MCF 10A (cell line): ENCODE measurements at regions of chr11 and their contacts with region 1.

Region 1: GRCh38 chr11:63838678-63839507 is at the start of gene MARK2:
- DNase-seq: peak; percentile 97
- H3K4me3 Mint-ChIP-seq: peak within 1 kb of the TSS; percentile 93
- H3K27ac Mint-ChIP-seq: peak within 1 kb of the TSS; percentile 73
- H3K4me1 Mint-ChIP-seq: peaks cover 40% of the 10 kb centered on the region
- H3K27me3 Mint-ChIP-seq: no peaks in the 10 kb centered on the region
- CTCF ChIP-seq: no peak
- total RNA-seq, gene MARK2: 36.9 and 39.8 TPM in 2 replicates

Region 2: GRCh38 chr11:63536669-63537292 is 302.1 kb before region 1 on chr11 and contains the start of gene PLAAT4:
- CTCF ChIA-PET with region 1: no interaction called
- POLR2A ChIA-PET with region 1: no interaction called
- intact Hi-C with region 1: no loop called
- DNase-seq: peak; percentile 11
- H3K4me3 Mint-ChIP-seq: peak within 1 kb of the TSS; percentile 39
- H3K27ac Mint-ChIP-seq: peak within 1 kb of the TSS; percentile 84
- H3K4me1 Mint-ChIP-seq: peaks cover 7% of the 10 kb centered on the region
- H3K27me3 Mint-ChIP-seq: no peaks in the 10 kb centered on the region
- CTCF ChIP-seq: no peak
- total RNA-seq, gene PLAAT4: 0.69 and 0.96 TPM in 2 replicates

Region 3: GRCh38 chr11:63768237-63769043 is 70.5 kb before region 1 on chr11 and contains the start of gene ZFTA:
- CTCF ChIA-PET with region 1: interaction called, 25 read pairs
- POLR2A ChIA-PET with region 1: interaction called, 5 read pairs
- intact Hi-C with region 1: loop called (anchors 2 kb)
- DNase-seq: peak; percentile 50
- H3K4me3 Mint-ChIP-seq: peak within 1 kb of the TSS; percentile 97
- H3K27ac Mint-ChIP-seq: peak within 1 kb of the TSS; percentile 68
- H3K4me1 Mint-ChIP-seq: peaks cover 12% of the 10 kb centered on the region
- H3K27me3 Mint-ChIP-seq: no peaks in the 10 kb centered on the region
- CTCF ChIP-seq: peak; percentile 81
- total RNA-seq, gene ZFTA: 2.6 and 5.2 TPM in 2 replicates

Region 4: GRCh38 chr11:63866211-63866610 is 27.3 kb after region 1 on chr11:
- CTCF ChIA-PET with region 1: interaction called, 19 read pairs
- POLR2A ChIA-PET with region 1: interaction called, 19 read pairs
- intact Hi-C with region 1: no loop called
- DNase-seq: peak; percentile 83
- H3K4me3 Mint-ChIP-seq: no peak overlapping the region
- H3K27ac Mint-ChIP-seq: peak overlapping the region; percentile 13
- H3K4me1 Mint-ChIP-seq: peaks cover 43% of the 10 kb centered on the region
- H3K27me3 Mint-ChIP-seq: no peaks in the 10 kb centered on the region
- CTCF ChIP-seq: no peak

Region 5: DNA sequence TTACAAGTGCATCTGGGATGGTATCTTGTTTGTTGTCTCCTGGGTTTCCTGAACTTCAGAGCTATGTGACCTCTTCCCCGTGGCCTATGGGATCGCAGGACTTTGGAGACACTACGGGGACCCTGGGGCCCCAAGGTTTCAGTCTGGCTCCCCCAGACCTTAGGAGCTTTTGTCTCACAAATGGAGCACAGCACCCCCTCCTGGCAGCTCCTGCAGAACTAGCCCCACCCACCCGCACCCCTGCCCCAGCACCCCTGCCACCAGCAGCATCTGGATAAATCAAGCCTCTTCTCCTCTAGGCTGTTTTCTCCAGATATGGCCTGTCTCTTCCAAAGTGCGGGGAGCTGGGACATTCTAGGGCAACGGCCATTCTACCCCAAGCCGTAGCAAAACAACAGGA is 67.7 kb after region 1 on chr11:
- CTCF ChIA-PET with region 1: interaction called, 41 read pairs
- POLR2A ChIA-PET with region 1: no interaction called
- intact Hi-C with region 1: loop called (anchors 1 kb)
- DNase-seq: no peak
- H3K4me3 Mint-ChIP-seq: no peak overlapping the region
- H3K27ac Mint-ChIP-seq: no peak overlapping the region
- H3K4me1 Mint-ChIP-seq: no peaks in the 10 kb centered on the region
- H3K27me3 Mint-ChIP-seq: no peaks in the 10 kb centered on the region
- CTCF ChIP-seq: peak; percentile 37

Region 6: GRCh38 chr11:63951779-63952536 is 113.1 kb after region 1 on chr11:
- CTCF ChIA-PET with region 1: interaction called, 241 read pairs
- POLR2A ChIA-PET with region 1: interaction called, 37 read pairs
- intact Hi-C with region 1: no loop called
- DNase-seq: no peak
- H3K4me3 Mint-ChIP-seq: no peak overlapping the region
- H3K27ac Mint-ChIP-seq: no peak overlapping the region
- H3K4me1 Mint-ChIP-seq: no peaks in the 10 kb centered on the region
- H3K27me3 Mint-ChIP-seq: no peaks in the 10 kb centered on the region
- CTCF ChIP-seq: no peak

Region 7: GRCh38 chr11:64152841-64153691 is 314.2 kb after region 1 on chr11:
- CTCF ChIA-PET with region 1: interaction called, 45 read pairs
- POLR2A ChIA-PET with region 1: interaction called, 5 read pairs
- intact Hi-C with region 1: no loop called
- DNase-seq: peak; percentile 53
- H3K4me3 Mint-ChIP-seq: no peak overlapping the region
- H3K27ac Mint-ChIP-seq: no peak overlapping the region
- H3K4me1 Mint-ChIP-seq: no peaks in the 10 kb centered on the region
- H3K27me3 Mint-ChIP-seq: no peaks in the 10 kb centered on the region
- CTCF ChIP-seq: peak; percentile 98